Pancreas (tissue), 10 donors: ENCODE measurements at regions of chr16 and their contacts with region 1.

Region 1: GRCh38 chr16:19375561-19376158 is 42.0 kb upstream of the TMC5 start:
- DNase-seq: peak in 1 of 6 donors; percentile 51
- ATAC-seq: peak; percentile 55 to 90 (median 83)
- H3K4me3 ChIP-seq: no peak overlapping the region
- H3K27ac ChIP-seq: no peak overlapping the region
- H3K4me1 ChIP-seq: peaks cover 0 to 5% (median 0%) of the 10 kb centered on the region in 3 donors
- H3K27me3 ChIP-seq: no peaks in the 10 kb centered on the region
- CTCF ChIP-seq: peak; percentile 61 to 82 (median 74)

Region 2: DNA sequence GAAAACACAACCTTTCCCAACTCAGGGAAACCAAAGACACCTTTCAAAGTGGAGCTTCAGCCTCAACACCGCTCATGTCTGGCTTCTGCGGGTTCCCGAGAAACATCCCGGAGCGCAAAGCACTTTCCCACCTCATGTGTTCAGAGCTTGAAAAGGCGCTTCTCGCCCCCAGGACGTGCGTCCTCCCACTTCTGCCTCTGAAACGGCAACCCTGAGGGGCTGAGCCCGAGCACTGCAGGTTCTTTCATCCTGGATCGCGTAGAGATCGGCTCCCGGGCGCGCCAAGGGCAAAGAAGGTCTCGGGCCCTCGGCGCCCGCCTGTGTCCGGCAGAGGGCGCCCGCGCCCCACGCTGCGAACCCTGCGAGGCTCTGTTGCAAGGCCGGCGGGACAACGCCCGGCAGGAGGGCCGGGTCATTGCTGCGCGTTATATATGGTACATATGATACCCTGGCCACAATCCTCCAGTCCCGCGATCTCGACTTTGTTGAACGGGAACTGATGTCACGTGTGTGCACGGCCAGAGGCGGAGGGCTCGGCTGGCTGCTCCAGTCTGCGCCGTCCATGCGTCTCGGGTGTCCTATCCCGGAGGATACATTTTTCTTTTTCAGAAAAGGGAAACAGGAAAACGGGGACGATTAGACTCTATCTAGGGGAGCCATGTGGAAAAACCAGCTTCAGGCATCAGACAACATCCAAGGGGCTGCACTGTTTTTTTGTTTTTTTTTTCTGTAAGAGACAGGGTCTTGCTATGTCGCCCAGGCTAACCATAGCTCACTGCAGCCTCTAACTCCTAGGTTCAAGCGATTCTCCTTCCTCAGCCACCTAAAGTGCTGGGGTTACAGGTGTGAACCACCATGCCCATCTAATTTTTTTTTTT is 289.1 kb before region 1 on chr16:
- intact Hi-C with region 1: loop called in 1 of 3 experiments (anchors 5 kb)
- DNase-seq: peak; percentile 68 to 98 (median 86)
- ATAC-seq: peak; percentile 98 to 100 (median 99)
- H3K4me3 ChIP-seq: peak overlapping the region in 2 of 4 donors; percentile 24 to 44
- H3K27ac ChIP-seq: no peak overlapping the region
- H3K4me1 ChIP-seq: peaks cover 0 to 5% (median 0%) of the 10 kb centered on the region in 3 donors
- H3K27me3 ChIP-seq: no peaks in the 10 kb centered on the region
- CTCF ChIP-seq: peak; percentile 96 to 100 (median 98)

Region 3: DNA sequence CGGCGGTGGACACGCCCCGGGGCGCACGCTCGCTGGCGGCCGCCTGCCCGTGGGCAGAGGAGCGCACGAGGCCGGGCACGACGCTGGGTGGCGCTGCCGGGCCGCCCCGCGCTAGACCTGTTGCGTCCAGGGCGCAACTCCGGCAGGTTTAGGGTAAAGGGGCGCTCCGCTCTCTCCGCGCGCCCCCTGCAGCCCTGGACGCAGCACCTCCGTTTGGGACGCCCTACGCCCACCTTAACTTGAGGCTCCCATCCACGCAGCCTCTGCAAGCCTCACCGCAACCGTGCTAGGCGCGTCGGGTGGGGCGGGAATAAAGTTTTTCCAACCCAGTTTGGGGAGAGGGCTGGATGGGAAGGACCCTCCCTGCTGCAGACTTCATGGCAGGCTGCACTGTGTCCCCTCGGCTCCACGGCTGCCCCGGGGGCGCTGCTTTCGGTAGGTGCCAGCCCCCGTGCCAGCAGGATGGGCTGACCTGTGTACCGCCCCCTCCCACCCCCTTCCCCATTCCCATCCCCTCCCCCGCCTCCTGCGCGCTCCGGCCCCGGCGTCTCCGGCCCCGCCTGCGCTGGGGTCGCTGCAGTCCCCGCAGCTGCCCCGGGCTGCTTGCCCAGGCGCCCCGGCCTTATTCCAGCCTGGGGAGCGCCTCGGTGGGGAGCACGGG is 207.8 kb before region 1 on chr16 and contains the start of gene SYT17:
- intact Hi-C with region 1: loop called in 2 of 3 experiments (anchors 10 kb)
- DNase-seq: peak; percentile 52 to 88 (median 76)
- ATAC-seq: peak; percentile 90 to 95 (median 93)
- H3K4me3 ChIP-seq: peak within 1 kb of the TSS; percentile 37 to 66 (median 50)
- H3K27ac ChIP-seq: peak within 1 kb of the TSS in 2 of 4 donors; percentile 44 to 52
- H3K4me1 ChIP-seq: peaks cover 0 to 2% (median 0%) of the 10 kb centered on the region in 3 donors
- H3K27me3 ChIP-seq: no peaks in the 10 kb centered on the region
- CTCF ChIP-seq: peak; percentile 63 to 86 (median 78)
- total RNA-seq, gene SYT17: 2.0 to 5.6 (median 2.7) TPM

Region 4: GRCh38 chr16:19179546-19180490 is 195.8 kb before region 1 on chr16:
- intact Hi-C with region 1: loop called in 1 of 3 experiments (anchors 10 kb)
- DNase-seq: peak in 5 of 6 donors; percentile 18 to 84 (median 62)
- ATAC-seq: peak; percentile 71 to 89 (median 80)
- H3K4me3 ChIP-seq: no peak overlapping the region
- H3K27ac ChIP-seq: no peak overlapping the region
- H3K4me1 ChIP-seq: peaks cover 0 to 3% (median 0%) of the 10 kb centered on the region in 3 donors
- H3K27me3 ChIP-seq: no peaks in the 10 kb centered on the region
- CTCF ChIP-seq: peak; percentile 54 to 75 (median 64)

Region 5: GRCh38 chr16:19274165-19274797 is 101.4 kb before region 1 on chr16:
- intact Hi-C with region 1: no loop called
- DNase-seq: peak in 2 of 6 donors; percentile 8 to 15
- ATAC-seq: peak; percentile 26 to 62 (median 48)
- H3K4me3 ChIP-seq: no peak overlapping the region
- H3K27ac ChIP-seq: no peak overlapping the region
- H3K4me1 ChIP-seq: no peaks in the 10 kb centered on the region
- H3K27me3 ChIP-seq: no peaks in the 10 kb centered on the region
- CTCF ChIP-seq: no peak